ENCODE measurements at regions of chr2 and their contacts with region 1.

Region 1: DNA sequence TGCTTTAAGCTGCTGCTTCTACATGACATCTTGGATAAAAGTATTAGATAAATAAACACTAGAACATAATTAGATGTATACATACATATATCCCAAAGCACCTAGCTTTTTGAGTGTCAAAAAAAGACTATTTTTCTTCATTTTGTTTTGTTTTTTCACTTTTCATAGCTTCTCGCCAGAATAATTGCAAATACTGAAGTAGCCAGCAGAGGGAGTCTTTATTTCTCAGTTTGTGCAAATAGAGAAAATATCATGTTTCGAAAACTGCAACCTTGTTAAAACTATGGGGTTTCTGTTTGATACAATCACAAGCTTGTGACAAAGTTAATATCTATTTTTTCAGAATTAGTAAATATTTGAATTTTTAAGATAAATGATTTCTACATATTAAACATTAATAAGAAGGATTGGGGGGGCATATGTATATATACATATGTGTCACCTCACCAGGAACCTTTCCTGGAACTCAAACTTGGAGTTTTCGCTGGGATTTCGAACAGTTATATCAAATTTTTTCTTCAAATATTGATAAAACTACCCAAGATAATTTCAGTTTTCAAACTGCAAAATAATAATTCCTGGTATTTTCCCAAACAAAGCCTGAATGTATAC is 61.0 kb downstream of the GRB14 start:
- DNase-seq: peak; percentile 30
- H3K4me3 Mint-ChIP-seq: no peak overlapping the region
- H3K27ac Mint-ChIP-seq: no peak overlapping the region
- H3K4me1 Mint-ChIP-seq: no peaks in the 10 kb centered on the region
- H3K27me3 Mint-ChIP-seq: no peaks in the 10 kb centered on the region
- CTCF ChIP-seq: peak; percentile 70

Region 2: DNA sequence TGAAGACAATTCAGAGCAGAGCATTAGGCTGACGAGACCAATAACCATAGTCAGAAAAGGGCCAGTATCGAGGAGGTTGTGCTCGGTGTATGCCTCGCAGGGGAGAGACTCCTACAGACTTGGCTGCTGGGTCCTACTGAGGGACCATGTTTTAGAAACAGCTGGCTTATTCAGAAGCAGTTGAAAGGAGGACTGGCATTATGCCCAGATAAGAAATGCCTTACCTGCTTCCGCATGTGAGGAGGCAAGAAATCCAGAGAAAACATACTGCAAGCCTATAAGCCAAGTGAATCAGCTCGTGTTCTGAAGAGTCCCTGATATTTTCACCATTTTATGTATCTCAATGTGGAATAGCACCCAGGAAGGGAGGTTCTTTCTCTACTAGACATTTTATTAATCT is 373.7 kb before region 1 on chr2:
- CTCF ChIA-PET with region 1: no interaction called
- POLR2A ChIA-PET with region 1: no interaction called
- intact Hi-C with region 1: no loop called
- DNase-seq: no peak
- H3K4me3 Mint-ChIP-seq: no peak overlapping the region
- H3K27ac Mint-ChIP-seq: no peak overlapping the region
- H3K4me1 Mint-ChIP-seq: no peaks in the 10 kb centered on the region
- H3K27me3 Mint-ChIP-seq: no peaks in the 10 kb centered on the region
- CTCF ChIP-seq: no peak

Region 3: DNA sequence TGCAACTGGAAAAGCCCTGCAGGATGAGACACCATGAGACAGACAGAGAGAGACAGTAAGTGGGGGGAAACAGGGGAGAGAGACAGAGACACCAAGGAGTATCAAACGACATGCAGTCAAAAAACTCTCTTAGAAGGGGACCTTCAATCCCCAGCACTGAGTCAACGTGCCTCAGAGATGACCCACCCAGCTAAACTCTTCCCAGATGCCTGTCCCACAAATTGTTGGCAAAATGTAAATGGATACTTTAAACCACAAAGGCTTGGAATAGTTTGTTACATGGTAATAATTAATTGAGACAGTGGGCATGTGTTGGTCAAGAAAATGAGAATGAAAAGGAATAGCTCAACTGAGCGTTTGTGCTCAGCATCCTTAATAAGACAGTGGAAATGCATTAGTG is 37.3 kb before region 1 on chr2:
- CTCF ChIA-PET with region 1: no interaction called
- POLR2A ChIA-PET with region 1: no interaction called
- intact Hi-C with region 1: no loop called
- DNase-seq: no peak
- H3K4me3 Mint-ChIP-seq: no peak overlapping the region
- H3K27ac Mint-ChIP-seq: no peak overlapping the region
- H3K4me1 Mint-ChIP-seq: no peaks in the 10 kb centered on the region
- H3K27me3 Mint-ChIP-seq: no peaks in the 10 kb centered on the region
- CTCF ChIP-seq: no peak

Region 4: GRCh38 chr2:164570475-164570874 is 10.2 kb after region 1 on chr2:
- CTCF ChIA-PET with region 1: interaction called, 26 read pairs
- POLR2A ChIA-PET with region 1: no interaction called
- intact Hi-C with region 1: no loop called
- DNase-seq: no peak
- H3K4me3 Mint-ChIP-seq: no peak overlapping the region
- H3K27ac Mint-ChIP-seq: no peak overlapping the region
- H3K4me1 Mint-ChIP-seq: no peaks in the 10 kb centered on the region
- H3K27me3 Mint-ChIP-seq: no peaks in the 10 kb centered on the region
- CTCF ChIP-seq: no peak

Region 5: GRCh38 chr2:164599966-164600589 is 39.8 kb after region 1 on chr2:
- CTCF ChIA-PET with region 1: interaction called, 67 read pairs
- POLR2A ChIA-PET with region 1: interaction called, 3 read pairs
- intact Hi-C with region 1: loop called (anchors 1 kb)
- DNase-seq: peak; percentile 81
- H3K4me3 Mint-ChIP-seq: no peak overlapping the region
- H3K27ac Mint-ChIP-seq: no peak overlapping the region
- H3K4me1 Mint-ChIP-seq: peaks cover 13% of the 10 kb centered on the region
- H3K27me3 Mint-ChIP-seq: no peaks in the 10 kb centered on the region
- CTCF ChIP-seq: peak; percentile 83

Region 6: DNA sequence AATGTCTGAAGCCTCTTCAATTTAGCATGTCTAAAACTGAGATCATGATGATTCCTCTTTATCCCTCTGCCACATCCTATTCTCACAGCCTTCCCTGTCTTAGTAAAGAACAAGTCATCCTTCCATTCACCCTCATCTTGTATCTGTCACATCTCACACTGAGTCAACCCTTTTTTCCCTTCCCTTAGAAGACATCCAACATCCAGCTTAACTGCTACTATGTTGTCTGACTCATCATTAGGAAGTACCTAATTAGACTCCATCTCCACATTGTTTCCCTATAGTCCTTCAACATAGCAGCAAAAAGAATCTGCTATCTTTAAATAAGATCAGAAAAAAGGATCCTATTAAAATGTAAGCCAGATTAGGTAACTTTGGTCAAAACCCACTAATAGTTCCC is 146.2 kb after region 1 on chr2:
- CTCF ChIA-PET with region 1: interaction called, 12 read pairs
- POLR2A ChIA-PET with region 1: no interaction called
- intact Hi-C with region 1: no loop called
- DNase-seq: peak; percentile 18
- H3K4me3 Mint-ChIP-seq: no peak overlapping the region
- H3K27ac Mint-ChIP-seq: no peak overlapping the region
- H3K4me1 Mint-ChIP-seq: peaks cover 5% of the 10 kb centered on the region
- H3K27me3 Mint-ChIP-seq: no peaks in the 10 kb centered on the region
- CTCF ChIP-seq: no peak